PC-3 (cell line): ENCODE measurements at regions of chr18 and their contacts with region 1.

Region 1: DNA sequence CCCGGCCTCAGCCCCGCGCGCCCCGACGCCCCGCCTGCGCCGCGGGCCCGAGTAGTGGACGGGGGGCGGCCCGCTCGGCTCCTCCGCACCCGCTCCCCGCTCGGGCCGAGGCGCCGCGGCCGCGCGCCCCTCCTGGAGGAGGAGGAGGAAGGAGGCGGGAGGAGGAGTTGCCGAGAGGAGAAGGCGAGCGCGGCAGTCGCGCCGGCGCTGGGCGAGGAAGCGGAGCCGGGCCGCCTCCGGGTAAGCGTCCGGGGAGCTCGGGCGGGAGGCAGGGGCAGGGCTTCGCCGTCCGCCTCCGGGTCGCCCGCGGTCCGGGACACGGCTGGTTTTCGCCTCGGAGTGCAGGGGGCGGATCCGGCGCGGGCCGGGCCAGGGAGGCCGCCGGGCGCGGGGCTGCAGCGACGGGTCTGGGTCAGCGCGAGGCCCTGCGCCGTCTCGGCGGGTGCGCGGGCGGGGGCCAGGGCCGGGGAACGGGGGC is at the start of gene SOCS6:
- DNase-seq: peak; percentile 63
- ATAC-seq: peak; percentile 57
- H3K4me3 ChIP-seq: peak within 1 kb of the TSS; percentile 86
- H3K27ac ChIP-seq: peak within 1 kb of the TSS; percentile 60
- H3K4me1 ChIP-seq: peaks cover 35% of the 10 kb centered on the region
- H3K27me3 ChIP-seq: no peaks in the 10 kb centered on the region
- CTCF ChIP-seq: no peak
- total RNA-seq, gene SOCS6: 17.9 and 20.8 TPM in 2 replicates

Region 2: DNA sequence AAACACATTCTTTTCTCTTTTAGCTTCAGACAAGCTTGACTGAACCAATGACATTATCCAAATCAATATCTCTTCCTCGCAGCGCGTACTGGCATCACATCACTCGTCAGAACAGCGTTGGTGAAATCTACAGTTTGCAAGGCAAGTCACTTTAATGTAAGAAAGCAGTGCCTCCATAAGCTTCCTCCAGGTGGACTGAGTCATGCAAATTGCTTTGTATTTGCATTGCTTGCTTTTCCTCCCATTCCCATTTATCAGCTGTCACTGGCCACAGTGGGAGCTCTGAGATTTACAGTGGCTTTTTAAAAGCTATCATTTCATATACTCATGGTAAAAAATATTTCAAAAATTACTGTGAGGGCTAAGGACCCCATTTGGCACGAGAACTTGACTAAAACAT is 531.2 kb before region 1 on chr18:
- CTCF ChIA-PET with region 1: no interaction called
- POLR2A ChIA-PET with region 1: no interaction called
- intact Hi-C with region 1: no loop called
- DNase-seq: peak; percentile 70
- ATAC-seq: peak; percentile 58
- H3K4me3 ChIP-seq: no peak overlapping the region
- H3K27ac ChIP-seq: peak overlapping the region; percentile 96
- H3K4me1 ChIP-seq: peaks cover 37% of the 10 kb centered on the region
- H3K27me3 ChIP-seq: no peaks in the 10 kb centered on the region
- CTCF ChIP-seq: no peak

Region 3: DNA sequence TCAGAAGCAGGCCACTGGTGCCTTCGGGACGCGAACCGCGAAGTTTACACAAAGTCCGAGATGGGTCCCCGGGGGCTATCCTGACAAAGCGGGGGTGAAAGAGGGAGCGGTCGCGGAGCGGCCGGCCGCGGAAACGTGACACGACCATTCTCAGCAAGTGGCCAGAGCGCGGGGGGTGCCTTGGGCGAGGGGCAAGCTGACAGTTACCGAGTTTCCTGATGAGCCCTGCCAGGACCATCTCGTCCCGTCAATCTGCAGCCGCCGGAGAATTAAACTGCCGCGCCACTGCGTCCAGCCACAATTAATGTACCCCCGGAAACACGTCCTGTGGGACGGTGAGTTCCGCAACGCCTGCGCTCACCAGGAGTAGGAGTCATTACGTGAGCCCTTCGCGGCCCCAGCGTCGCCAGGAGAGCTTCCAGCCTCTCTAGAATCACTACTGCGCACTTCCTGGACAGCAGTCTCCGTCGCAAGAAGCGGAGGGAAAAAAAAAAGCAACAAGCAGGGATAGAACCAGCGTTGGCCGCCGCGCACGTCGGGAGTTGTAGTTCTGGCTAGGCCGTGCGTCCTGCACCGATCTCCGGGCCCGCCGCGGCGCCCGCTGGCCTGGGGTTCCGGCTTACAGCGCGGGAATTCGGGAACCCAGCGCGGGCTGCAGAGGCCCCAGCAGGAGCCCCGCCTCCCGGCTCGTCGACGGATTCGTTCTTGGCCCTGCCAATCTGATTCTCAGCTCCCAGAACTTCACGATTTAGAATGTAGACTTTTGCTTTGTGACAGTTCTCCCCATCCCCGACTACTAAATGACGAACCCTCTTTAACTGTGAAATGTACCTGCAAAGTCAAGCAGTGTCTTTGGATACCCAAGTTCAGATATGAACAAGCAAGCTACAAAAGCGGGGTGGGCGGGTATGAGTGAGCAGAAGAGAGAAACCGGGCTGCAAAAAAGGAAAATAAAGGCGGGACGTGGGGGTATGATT is 83.2 kb before region 1 on chr18 and contains the start of gene RTTN:
- CTCF ChIA-PET with region 1: no interaction called
- POLR2A ChIA-PET with region 1: no interaction called
- intact Hi-C with region 1: loop called (anchors 2 kb)
- DNase-seq: peak; percentile 94
- ATAC-seq: peak; percentile 97
- H3K4me3 ChIP-seq: peak within 1 kb of the TSS; percentile 92
- H3K27ac ChIP-seq: peak within 1 kb of the TSS; percentile 95
- H3K4me1 ChIP-seq: peaks cover 8% of the 10 kb centered on the region; the same call in 1 of the 2 replicates
- H3K27me3 ChIP-seq: no peaks in the 10 kb centered on the region
- CTCF ChIP-seq: no peak
- total RNA-seq, gene RTTN: 22.4 and 24.7 TPM in 2 replicates

Region 4: GRCh38 chr18:70243131-70243530 is 45.8 kb before region 1 on chr18:
- CTCF ChIA-PET with region 1: no interaction called
- POLR2A ChIA-PET with region 1: no interaction called
- intact Hi-C with region 1: loop called (anchors 1 kb)
- DNase-seq: peak; percentile 88
- ATAC-seq: peak; percentile 97
- H3K4me3 ChIP-seq: peak overlapping the region; percentile 59
- H3K27ac ChIP-seq: peak overlapping the region; percentile 95
- H3K4me1 ChIP-seq: peaks cover 16% of the 10 kb centered on the region
- H3K27me3 ChIP-seq: no peaks in the 10 kb centered on the region
- CTCF ChIP-seq: no peak

Region 5: DNA sequence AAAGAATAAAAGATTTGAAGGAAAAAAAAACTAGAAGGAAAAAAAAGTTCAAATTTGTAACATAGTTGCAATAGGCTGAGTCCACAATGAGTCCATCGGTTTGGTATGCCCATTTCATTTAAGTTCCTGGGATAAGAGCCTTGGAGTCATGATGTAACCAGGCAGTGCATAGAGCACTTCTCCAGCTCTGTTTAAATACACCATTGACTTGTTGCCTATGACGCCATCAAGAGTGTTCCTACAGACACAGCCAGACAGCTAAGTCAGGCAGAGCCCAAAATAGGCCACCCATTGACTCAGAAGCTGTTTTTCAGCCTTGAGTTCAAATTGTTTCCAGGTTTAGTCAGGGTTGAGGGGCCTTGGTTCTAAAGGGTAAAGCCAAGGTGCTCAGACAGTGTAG is 44.9 kb after region 1 on chr18:
- CTCF ChIA-PET with region 1: no interaction called
- POLR2A ChIA-PET with region 1: no interaction called
- intact Hi-C with region 1: loop called (anchors 5 kb)
- DNase-seq: peak; percentile 66
- ATAC-seq: peak; percentile 16; the same call in 1 of the 2 replicates
- H3K4me3 ChIP-seq: no peak overlapping the region
- H3K27ac ChIP-seq: peak overlapping the region; percentile 78
- H3K4me1 ChIP-seq: peaks cover 50% of the 10 kb centered on the region
- H3K27me3 ChIP-seq: no peaks in the 10 kb centered on the region
- CTCF ChIP-seq: no peak

Region 6: GRCh38 chr18:70431203-70431624 is 142.3 kb after region 1 on chr18:
- CTCF ChIA-PET with region 1: no interaction called
- POLR2A ChIA-PET with region 1: no interaction called
- intact Hi-C with region 1: loop called (anchors 1 kb)
- DNase-seq: no peak
- ATAC-seq: no peak
- H3K4me3 ChIP-seq: no peak overlapping the region
- H3K27ac ChIP-seq: no peak overlapping the region
- H3K4me1 ChIP-seq: peaks cover 5% of the 10 kb centered on the region; the same call in 1 of the 2 replicates
- H3K27me3 ChIP-seq: no peaks in the 10 kb centered on the region
- CTCF ChIP-seq: no peak